PC-9 (cell line): ENCODE measurements at regions of chr1 and their contacts with region 1.

Region 1: GRCh38 chr1:172554915-172555314 is 22.0 kb downstream of the SUCO start:
- DNase-seq: no peak
- H3K4me3 ChIP-seq: no peak overlapping the region
- H3K27ac ChIP-seq: no peak overlapping the region
- H3K4me1 ChIP-seq: peaks cover 4% of the 10 kb centered on the region
- H3K27me3 ChIP-seq: no peaks in the 10 kb centered on the region
- CTCF ChIP-seq: no peak

Region 2: GRCh38 chr1:172567720-172568119 is 12.8 kb after region 1 on chr1:
- CTCF ChIA-PET with region 1: no interaction called
- POLR2A ChIA-PET with region 1: no interaction called
- intact Hi-C with region 1: loop called (anchors 2 kb)
- DNase-seq: no peak
- H3K4me3 ChIP-seq: no peak overlapping the region
- H3K27ac ChIP-seq: no peak overlapping the region
- H3K4me1 ChIP-seq: no peaks in the 10 kb centered on the region
- H3K27me3 ChIP-seq: no peaks in the 10 kb centered on the region
- CTCF ChIP-seq: no peak